Activated CD4-positive, alpha-beta T cell treated with anti-CD3 and anti-CD28 coated beads for 36 hours (primary cell): ENCODE measurements at regions of chr19 and their contacts with region 1.

Region 1: DNA sequence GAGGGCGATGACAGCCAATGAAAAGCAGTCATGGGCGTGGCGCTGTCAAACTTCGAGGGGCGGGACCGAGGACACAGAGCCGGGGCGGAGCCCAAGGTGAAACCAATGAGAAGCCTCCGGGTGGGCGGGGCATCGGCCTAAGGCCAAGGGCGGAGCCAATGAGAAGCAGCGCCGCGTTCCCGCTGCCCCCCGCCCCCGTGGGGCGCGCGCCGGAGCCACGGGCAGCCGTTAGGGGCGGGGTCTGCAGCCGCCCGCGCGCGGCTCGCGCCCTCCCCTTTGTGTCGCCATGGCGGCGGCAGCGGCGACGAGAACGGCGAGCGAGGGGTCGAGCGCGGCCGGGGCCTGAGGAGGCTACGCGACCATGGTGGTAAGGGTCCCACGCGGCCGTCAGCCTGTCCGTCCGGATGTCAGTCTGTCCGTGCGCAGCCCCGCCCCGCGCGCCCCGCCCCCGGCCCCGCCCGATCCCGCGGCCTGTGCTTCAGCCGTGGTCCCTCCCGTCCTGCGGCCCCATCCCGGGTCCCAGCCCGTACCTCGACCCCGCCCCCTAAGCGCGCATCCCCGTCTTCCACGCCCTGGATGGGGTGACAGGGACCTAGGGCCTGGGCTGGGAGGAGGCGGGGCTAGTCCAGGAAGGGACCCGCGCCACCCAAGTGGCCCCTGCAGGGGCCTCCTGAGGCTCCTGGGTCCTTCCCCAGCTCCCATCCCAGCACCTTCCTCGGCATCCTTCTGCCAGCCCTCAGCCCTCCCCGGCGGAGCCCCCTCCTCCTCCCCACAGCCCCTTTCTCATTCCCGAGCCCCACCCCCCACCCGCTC is at the start of gene ARHGAP33:
- DNase-seq: peak; percentile 100
- ATAC-seq: peak; percentile 98
- H3K4me3 Mint-ChIP-seq: peak within 1 kb of the TSS; percentile 75
- H3K27ac Mint-ChIP-seq: no peak within 1 kb of the TSS
- H3K4me1 Mint-ChIP-seq: peaks cover 12% of the 10 kb centered on the region
- H3K27me3 Mint-ChIP-seq: no peaks in the 10 kb centered on the region
- total RNA-seq, gene ARHGAP33: 27.8 to 35.2 TPM

Region 2: GRCh38 chr19:35702223-35703012 is 73.1 kb before region 1 on chr19:
- CTCF ChIA-PET with region 1: no interaction called
- POLR2A ChIA-PET with region 1: no interaction called
- intact Hi-C with region 1: loop called in 1 of 2 experiments (anchors 1 kb)
- DNase-seq: peak; percentile 97
- ATAC-seq: peak; percentile 99
- H3K4me3 Mint-ChIP-seq: peak overlapping the region; percentile 83
- H3K27ac Mint-ChIP-seq: peak overlapping the region; percentile 99
- H3K4me1 Mint-ChIP-seq: peaks cover 8% of the 10 kb centered on the region
- H3K27me3 Mint-ChIP-seq: no peaks in the 10 kb centered on the region

Region 3: GRCh38 chr19:35748106-35749020 is 27.1 kb before region 1 on chr19 and contains the start of gene LIN37:
- CTCF ChIA-PET with region 1: no interaction called
- POLR2A ChIA-PET with region 1: no interaction called
- intact Hi-C with region 1: loop called (anchors 1 kb)
- DNase-seq: peak; percentile 99
- ATAC-seq: peak; percentile 81
- H3K4me3 Mint-ChIP-seq: peak within 1 kb of the TSS; percentile 89
- H3K27ac Mint-ChIP-seq: peak within 1 kb of the TSS; percentile 94
- H3K4me1 Mint-ChIP-seq: peaks cover 40% of the 10 kb centered on the region
- H3K27me3 Mint-ChIP-seq: no peaks in the 10 kb centered on the region
- total RNA-seq, gene LIN37: 8.4 to 12.7 TPM

Region 4: GRCh38 chr19:35869327-35870123 is 94.0 kb after region 1 on chr19:
- CTCF ChIA-PET with region 1: no interaction called
- POLR2A ChIA-PET with region 1: no interaction called
- intact Hi-C with region 1: loop called in 1 of 2 experiments (anchors 1 kb)
- DNase-seq: peak; percentile 95
- ATAC-seq: peak; percentile 93
- H3K4me3 Mint-ChIP-seq: peak overlapping the region; percentile 52
- H3K27ac Mint-ChIP-seq: no peak overlapping the region
- H3K4me1 Mint-ChIP-seq: peaks cover 14% of the 10 kb centered on the region
- H3K27me3 Mint-ChIP-seq: peaks cover 37% of the 10 kb centered on the region

Region 5: GRCh38 chr19:36014029-36014924 is 238.8 kb after region 1 on chr19 and contains the start of gene ALKBH6:
- CTCF ChIA-PET with region 1: no interaction called
- POLR2A ChIA-PET with region 1: no interaction called
- intact Hi-C with region 1: loop called in 1 of 2 experiments (anchors 1 kb)
- DNase-seq: peak; percentile 100
- ATAC-seq: peak; percentile 98
- H3K4me3 Mint-ChIP-seq: peak within 1 kb of the TSS; percentile 96
- H3K27ac Mint-ChIP-seq: peak within 1 kb of the TSS; percentile 94
- H3K4me1 Mint-ChIP-seq: peaks cover 32% of the 10 kb centered on the region
- H3K27me3 Mint-ChIP-seq: no peaks in the 10 kb centered on the region
- total RNA-seq, gene ALKBH6: 40.6 to 42.2 TPM

Region 6: GRCh38 chr19:36041831-36042230 is 266.3 kb after region 1 on chr19:
- CTCF ChIA-PET with region 1: no interaction called
- POLR2A ChIA-PET with region 1: no interaction called
- intact Hi-C with region 1: no loop called
- DNase-seq: no peak
- ATAC-seq: no peak
- H3K4me3 Mint-ChIP-seq: no peak overlapping the region
- H3K27ac Mint-ChIP-seq: no peak overlapping the region
- H3K4me1 Mint-ChIP-seq: peaks cover 5% of the 10 kb centered on the region
- H3K27me3 Mint-ChIP-seq: no peaks in the 10 kb centered on the region